AG04449 (cell line): ENCODE measurements at regions of chr1 and their contacts with region 1.

Region 1: GRCh38 chr1:211698161-211699026 is 23.0 kb upstream of the NEK2 start:
- DNase-seq: no peak
- H3K4me3 ChIP-seq: peak overlapping the region; percentile 6; the same call in 1 of the 2 replicates
- CTCF ChIP-seq: peak; percentile 99

Region 2: DNA sequence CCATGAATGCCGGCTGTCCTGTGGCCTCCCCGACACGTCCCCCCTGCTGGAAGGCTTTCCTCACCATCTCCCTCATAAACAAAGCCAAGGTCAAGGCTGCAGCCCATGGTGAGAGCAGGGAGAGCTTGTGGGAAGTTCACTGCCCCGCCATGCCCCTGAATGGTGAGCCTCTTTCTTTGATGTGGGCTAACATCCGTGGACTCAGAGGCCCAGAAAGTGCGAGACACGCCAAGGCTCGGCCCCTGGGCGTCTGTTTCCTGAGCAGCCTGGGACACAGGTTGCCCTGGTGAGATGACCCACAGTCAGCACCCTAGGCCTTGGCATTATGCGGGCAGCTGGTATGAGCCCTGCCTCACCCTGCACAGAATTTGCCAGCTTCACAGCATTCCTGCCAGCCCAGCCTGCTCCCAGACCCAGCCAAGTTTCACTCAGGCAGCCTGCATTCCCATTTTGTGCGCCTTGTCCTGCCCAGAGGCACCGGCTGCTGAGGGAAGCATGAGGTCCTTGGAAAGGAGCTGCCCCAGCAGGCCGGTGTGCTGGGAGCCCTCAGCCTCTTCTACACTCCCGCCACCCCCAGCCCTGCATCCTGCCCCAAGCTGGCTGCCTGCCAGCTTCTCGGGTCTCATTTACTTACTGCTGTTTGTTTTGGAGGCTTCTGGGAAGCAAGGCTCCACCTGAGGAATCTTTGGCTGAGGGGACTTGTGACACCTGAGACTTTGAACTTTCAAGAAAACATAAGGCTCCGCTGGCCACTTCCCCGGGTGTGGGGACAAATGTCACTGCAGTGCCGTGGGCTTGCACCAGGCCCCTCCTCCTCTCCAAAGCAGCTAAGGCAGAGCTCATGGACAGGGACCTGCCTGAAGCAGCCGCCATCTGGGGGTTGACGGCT is 54.8 kb before region 1 on chr1:
- CTCF ChIA-PET with region 1: no interaction called
- POLR2A ChIA-PET with region 1: no interaction called
- DNase-seq: no peak
- H3K4me3 ChIP-seq: no peak overlapping the region
- CTCF ChIP-seq: no peak

Region 3: GRCh38 chr1:211675230-211676105 is 22.9 kb before region 1 on chr1 and contains the start of gene NEK2:
- CTCF ChIA-PET with region 1: interaction called, 89 read pairs
- POLR2A ChIA-PET with region 1: no interaction called
- DNase-seq: no peak
- H3K4me3 ChIP-seq: peak within 1 kb of the TSS; percentile 77
- CTCF ChIP-seq: no peak

Region 4: DNA sequence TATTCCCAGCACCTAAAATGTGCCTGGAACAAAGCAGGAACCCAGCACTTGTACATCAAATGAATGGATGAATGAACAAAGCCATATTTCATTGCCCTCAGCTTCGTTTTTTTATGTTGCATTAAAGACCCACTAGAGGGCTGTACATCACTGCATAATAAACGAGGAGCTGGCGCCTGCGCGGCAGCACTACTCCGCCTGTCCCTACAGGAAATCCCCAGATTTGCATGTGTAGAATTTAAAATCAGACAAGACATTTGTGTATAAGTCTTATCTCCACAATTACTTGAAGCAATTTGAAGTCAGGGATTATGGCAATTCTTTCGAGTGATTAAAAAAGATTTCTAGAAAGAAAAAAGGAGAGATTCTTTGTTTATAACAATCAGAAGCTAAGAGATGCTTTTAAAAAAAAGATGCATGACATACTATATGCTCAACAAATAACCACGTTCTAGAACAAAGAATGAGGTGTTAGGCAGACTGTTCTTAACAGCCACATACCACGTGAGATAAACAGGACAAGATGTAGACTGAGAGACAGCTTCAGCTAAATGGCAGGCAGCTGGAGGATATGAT is 17.6 kb before region 1 on chr1:
- CTCF ChIA-PET with region 1: interaction called, 89 read pairs
- POLR2A ChIA-PET with region 1: no interaction called
- DNase-seq: peak; percentile 57
- H3K4me3 ChIP-seq: no peak overlapping the region
- CTCF ChIP-seq: peak; percentile 58

Region 5: GRCh38 chr1:211715971-211716370 is 17.6 kb after region 1 on chr1:
- CTCF ChIA-PET with region 1: interaction called, 46 read pairs
- POLR2A ChIA-PET with region 1: no interaction called
- DNase-seq: no peak
- H3K4me3 ChIP-seq: no peak overlapping the region
- CTCF ChIP-seq: no peak

Region 6: GRCh38 chr1:211724687-211725196 is 26.3 kb after region 1 on chr1:
- CTCF ChIA-PET with region 1: interaction called, 27 read pairs
- POLR2A ChIA-PET with region 1: no interaction called
- DNase-seq: no peak
- H3K4me3 ChIP-seq: no peak overlapping the region
- CTCF ChIP-seq: no peak

Region 7: DNA sequence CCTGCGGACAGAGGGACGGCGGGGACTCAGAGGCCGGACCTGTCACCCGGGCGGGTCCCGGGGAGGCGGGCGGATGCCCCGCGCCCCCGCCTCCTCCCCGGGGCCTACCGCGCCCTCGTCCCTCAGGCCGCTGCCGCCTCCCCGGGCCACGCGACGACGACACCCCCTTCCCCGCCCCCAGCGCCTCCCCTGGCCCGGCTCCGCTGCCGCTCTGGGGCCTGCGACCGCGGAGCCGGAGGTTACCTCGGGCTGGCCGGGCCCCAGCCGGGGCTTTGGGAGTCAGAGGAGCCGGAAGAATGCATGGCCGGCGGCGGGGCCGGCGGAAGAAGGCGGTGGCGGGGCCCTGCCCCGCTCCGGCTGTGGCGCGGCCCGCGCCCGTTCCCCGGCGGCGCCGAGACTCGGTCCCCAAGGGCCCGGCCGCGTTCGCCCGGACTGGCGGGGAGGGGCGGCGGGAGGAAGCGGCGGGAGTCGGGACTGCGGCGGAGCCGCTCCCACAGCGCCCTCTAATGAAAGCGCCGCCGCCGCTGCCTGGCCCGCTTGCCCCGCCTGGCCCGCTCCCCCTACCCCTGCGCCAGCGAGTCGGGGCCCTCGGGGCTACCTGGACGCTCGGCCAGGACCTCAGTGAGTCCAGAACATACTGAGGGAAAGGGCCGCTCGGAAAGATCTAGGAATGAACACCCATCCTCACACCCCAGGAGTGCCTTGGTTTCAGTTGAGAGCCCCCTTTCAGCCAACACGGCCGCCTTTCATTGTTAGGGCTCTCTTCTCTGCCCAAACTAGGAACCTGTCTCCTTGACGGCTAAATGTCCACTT is 132.1 kb after region 1 on chr1 and contains the start of gene LPGAT1:
- CTCF ChIA-PET with region 1: interaction called, 48 read pairs
- POLR2A ChIA-PET with region 1: no interaction called
- DNase-seq: no peak
- H3K4me3 ChIP-seq: peak within 1 kb of the TSS; percentile 68
- CTCF ChIP-seq: peak; percentile 73